ENCODE measurements at regions of chr6 and their contacts with region 1.

Region 1: DNA sequence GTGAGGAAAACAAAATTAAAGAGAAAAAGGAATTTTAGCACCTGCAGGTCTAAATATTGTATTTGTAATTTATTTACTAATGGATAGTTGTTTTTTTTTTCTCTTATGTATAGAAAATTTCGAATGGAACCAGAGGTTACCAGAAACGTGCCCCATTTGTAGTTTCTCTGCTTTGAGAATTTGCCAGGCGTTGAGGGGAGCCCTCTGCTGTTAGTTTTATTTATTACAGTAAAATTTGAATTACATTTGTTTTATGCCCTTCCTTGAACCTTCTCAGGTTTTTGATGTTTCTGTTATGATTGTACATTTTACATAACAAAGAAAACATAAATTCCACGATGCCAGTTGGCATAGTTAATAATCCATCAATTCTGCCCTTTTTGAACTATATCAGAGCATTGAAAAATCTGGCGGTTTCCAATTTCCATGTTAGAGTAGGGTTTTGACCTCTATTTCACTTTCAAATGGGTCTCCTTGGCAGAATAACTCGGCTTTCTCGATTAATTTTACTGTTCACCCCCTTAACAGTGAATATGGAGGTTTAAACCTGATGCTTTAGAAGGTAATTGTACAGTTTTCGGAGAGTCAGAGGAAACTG is 35.1 kb upstream of the RFPL4B start:
- DNase-seq: no peak
- ATAC-seq: 0 out of 3 replicates have a peak, but pooled peaks have one; percentile 27
- H3K4me3 ChIP-seq: no peak overlapping the region
- H3K27ac ChIP-seq: no peak overlapping the region
- H3K4me1 ChIP-seq: peaks cover 6% of the 10 kb centered on the region
- H3K27me3 ChIP-seq: no peaks in the 10 kb centered on the region
- CTCF ChIP-seq: peak; percentile 54 to 69 (median 59)
- EP300 ChIP-seq: no peak
- POLR2A ChIP-seq: no peak
- RAD21 ChIP-seq: peak; percentile 84

Region 2: GRCh38 chr6:112188906-112189305 is 123.1 kb before region 1 on chr6:
- CTCF ChIA-PET with region 1: interaction called, 19 read pairs
- POLR2A ChIA-PET with region 1: no interaction called
- RAD21 ChIA-PET with region 1: interaction called, 4 read pairs
- SMC1A ChIA-PET with region 1: interaction called, 10 read pairs
- in situ Hi-C with region 1: loop called (anchors 5 kb)
- intact Hi-C with region 1: no loop called
- DNase-seq: no peak
- ATAC-seq: no peak
- H3K4me3 ChIP-seq: no peak overlapping the region
- H3K27ac ChIP-seq: no peak overlapping the region
- H3K4me1 ChIP-seq: no peaks in the 10 kb centered on the region
- H3K27me3 ChIP-seq: no peaks in the 10 kb centered on the region
- CTCF ChIP-seq: no peak
- EP300 ChIP-seq: no peak
- POLR2A ChIP-seq: no peak
- RAD21 ChIP-seq: no peak

Region 3: GRCh38 chr6:112196306-112196705 is 115.7 kb before region 1 on chr6:
- CTCF ChIA-PET with region 1: interaction called, 7 read pairs
- POLR2A ChIA-PET with region 1: no interaction called
- RAD21 ChIA-PET with region 1: no interaction called
- SMC1A ChIA-PET with region 1: interaction called, 10 read pairs
- in situ Hi-C with region 1: no loop called
- intact Hi-C with region 1: no loop called
- DNase-seq: no peak
- ATAC-seq: no peak
- H3K4me3 ChIP-seq: no peak overlapping the region
- H3K27ac ChIP-seq: no peak overlapping the region
- H3K4me1 ChIP-seq: no peaks in the 10 kb centered on the region
- H3K27me3 ChIP-seq: 0 out of 4 replicates have a peak, but pooled peaks cover 0 to 3% of the 10 kb centered on the region in 2 experiments
- CTCF ChIP-seq: no peak
- EP300 ChIP-seq: no peak
- POLR2A ChIP-seq: no peak
- RAD21 ChIP-seq: no peak

Region 4: DNA sequence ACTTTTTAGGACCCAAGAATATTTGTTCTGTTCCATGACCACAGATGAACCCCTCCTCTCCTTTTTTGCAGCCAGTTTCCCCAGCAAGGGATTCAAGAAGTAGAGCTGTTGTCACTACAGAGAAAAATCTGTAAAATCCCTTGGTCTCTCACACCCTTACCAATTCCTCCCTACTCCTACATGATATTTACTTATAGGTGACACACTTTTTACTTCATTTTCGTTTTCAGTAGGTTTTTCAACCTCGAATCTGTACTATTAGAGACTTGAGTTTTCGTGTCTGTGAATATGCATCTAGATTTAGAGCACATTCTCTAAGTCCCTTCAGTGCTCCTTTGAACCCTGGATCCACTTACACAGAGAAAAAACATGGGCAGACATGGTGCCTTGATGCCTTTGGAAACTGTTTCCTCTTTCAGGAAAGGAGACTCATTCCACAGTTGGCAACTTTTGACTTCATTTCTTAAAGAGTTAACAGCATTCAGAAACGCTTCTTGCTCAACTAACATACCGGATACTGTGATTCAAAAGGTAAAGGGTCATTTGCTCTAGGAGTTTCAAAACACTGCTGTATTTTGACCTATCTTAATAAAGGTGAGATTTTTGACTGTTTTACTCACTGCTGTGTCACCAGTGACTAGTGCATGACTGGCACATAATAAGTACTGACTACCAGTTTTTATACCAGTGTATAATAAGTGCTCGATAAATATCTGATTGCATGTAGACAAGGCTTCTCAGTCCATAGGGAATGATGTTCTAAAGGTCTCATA is 108.3 kb before region 1 on chr6:
- CTCF ChIA-PET with region 1: interaction called, 8 read pairs
- POLR2A ChIA-PET with region 1: interaction called, 3 read pairs
- RAD21 ChIA-PET with region 1: interaction called, 11 read pairs
- SMC1A ChIA-PET with region 1: interaction called, 3 read pairs
- in situ Hi-C with region 1: no loop called
- intact Hi-C with region 1: no loop called
- DNase-seq: no peak
- ATAC-seq: peak; percentile 54
- H3K4me3 ChIP-seq: no peak overlapping the region
- H3K27ac ChIP-seq: no peak overlapping the region
- H3K4me1 ChIP-seq: no peaks in the 10 kb centered on the region; the same call in 1 of the 2 replicates
- H3K27me3 ChIP-seq: no peaks in the 10 kb centered on the region
- CTCF ChIP-seq: no peak
- EP300 ChIP-seq: no peak
- POLR2A ChIP-seq: no peak
- RAD21 ChIP-seq: no peak

Region 5: DNA sequence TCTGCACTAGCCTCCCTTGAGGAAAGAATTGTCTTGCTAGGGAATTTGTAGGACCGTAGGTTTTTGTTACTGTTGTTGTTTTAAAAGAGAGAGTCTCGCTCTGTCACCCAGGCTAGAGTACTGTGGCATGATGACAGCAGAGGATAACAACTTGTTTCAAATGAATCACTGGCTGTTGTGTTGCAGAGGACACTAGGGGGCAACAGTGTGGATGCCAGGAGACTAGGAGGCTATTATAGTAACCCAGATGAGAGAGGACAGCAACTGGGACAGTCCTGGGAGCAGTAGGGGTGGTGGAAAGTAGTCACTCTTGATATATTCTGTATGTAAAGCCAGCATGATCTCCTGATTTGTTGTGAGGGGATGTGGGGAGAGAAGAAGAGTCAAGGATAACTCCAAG is 15.9 kb before region 1 on chr6:
- CTCF ChIA-PET with region 1: interaction called, 33 read pairs
- POLR2A ChIA-PET with region 1: interaction called, 3 read pairs
- RAD21 ChIA-PET with region 1: interaction called, 8 read pairs
- SMC1A ChIA-PET with region 1: interaction called, 15 read pairs
- in situ Hi-C with region 1: no loop called
- intact Hi-C with region 1: no loop called
- DNase-seq: no peak
- ATAC-seq: peak; percentile 83
- H3K4me3 ChIP-seq: no peak overlapping the region
- H3K27ac ChIP-seq: no peak overlapping the region
- H3K4me1 ChIP-seq: no peaks in the 10 kb centered on the region
- H3K27me3 ChIP-seq: peaks cover 0 to 2% of the 10 kb centered on the region in 2 experiments; a peak in 2 of 4 replicates
- CTCF ChIP-seq: peak; percentile 32 to 47 (median 34); a peak in 3 of 6 replicates
- EP300 ChIP-seq: no peak
- POLR2A ChIP-seq: no peak
- RAD21 ChIP-seq: peak; percentile 21; the same call in 1 of the 2 replicates

Measured in GM12878 (cell line).